ENCODE measurements at regions of chr9 and their contacts with region 1.

Region 1: GRCh38 chr9:131033269-131034224 is 24.6 kb downstream of the LAMC3 start:
- DNase-seq: peak in 1 of 5 donors; percentile 44
- ATAC-seq: no peak
- H3K4me3 ChIP-seq: no peak overlapping the region
- H3K27ac ChIP-seq: no peak overlapping the region
- H3K4me1 ChIP-seq: peaks cover 0 to 22% (median 17%) of the 10 kb centered on the region in 12 donors
- H3K27me3 ChIP-seq: no peaks in the 10 kb centered on the region
- CTCF ChIP-seq: no peak
- POLR2A ChIP-seq: no peak

Region 2: GRCh38 chr9:131011274-131012022 is 22.1 kb before region 1 on chr9:
- intact Hi-C with region 1: loop called in 1 of 10 experiments (anchors 2 kb)
- DNase-seq: peak in 2 of 5 donors; percentile 1 to 56
- ATAC-seq: no peak
- H3K4me3 ChIP-seq: no peak overlapping the region
- H3K27ac ChIP-seq: no peak overlapping the region
- H3K4me1 ChIP-seq: peaks cover 0 to 9% (median 0%) of the 10 kb centered on the region in 12 donors
- H3K27me3 ChIP-seq: peaks cover 0 to 38% (median 16%) of the 10 kb centered on the region in 9 donors
- CTCF ChIP-seq: no peak
- POLR2A ChIP-seq: no peak